Mammary epithelial cell (primary cell): ENCODE measurements at regions of chr1 and their contacts with region 1.

Region 1: DNA sequence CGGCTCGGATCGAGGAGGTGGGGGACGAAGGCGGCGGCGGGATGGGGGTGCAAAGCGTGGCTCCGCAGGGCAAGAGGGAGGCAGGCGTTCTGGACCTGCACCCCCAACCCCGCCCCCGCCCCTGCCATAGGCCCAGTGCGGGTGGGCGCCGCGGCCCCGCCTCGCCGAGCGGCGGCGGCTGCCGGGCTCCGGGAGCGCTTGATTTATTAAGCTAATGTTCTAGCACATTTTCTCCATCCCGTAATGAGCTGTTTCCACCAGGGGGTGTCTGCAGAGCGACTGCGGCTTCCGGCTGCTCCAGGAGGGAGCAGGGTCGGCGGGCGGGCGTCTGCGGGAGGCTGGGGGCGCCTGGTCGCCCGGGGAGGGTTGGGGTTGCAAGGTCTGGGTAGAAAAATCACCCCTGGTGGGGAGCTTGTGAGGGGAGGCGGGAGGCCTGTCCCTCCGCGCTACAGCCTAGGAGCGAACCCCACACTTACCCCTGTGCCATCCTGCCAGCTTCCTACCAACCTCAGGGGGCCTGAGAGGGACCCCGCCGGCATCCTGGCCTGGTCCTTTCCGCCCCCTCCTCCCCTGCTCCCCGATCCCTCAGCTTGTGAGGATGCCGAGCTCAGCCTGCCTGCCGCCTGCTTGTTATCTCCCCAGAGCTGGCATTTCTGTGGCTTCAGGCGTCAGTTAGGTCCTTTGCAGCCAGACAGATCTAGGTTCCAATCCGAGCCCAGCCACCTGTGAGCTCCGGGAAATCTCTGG is 48.5 kb upstream of the ACOT11 start:
- DNase-seq: peak; percentile 12
- H3K4me3 ChIP-seq: peak overlapping the region; percentile 29 to 45 (median 44)
- H3K27ac ChIP-seq: no peak overlapping the region
- H3K4me1 ChIP-seq: peaks cover 20% of the 10 kb centered on the region
- H3K27me3 ChIP-seq: no peaks in the 10 kb centered on the region
- CTCF ChIP-seq: peak in 1 of 2 donors; percentile 59

Region 2: DNA sequence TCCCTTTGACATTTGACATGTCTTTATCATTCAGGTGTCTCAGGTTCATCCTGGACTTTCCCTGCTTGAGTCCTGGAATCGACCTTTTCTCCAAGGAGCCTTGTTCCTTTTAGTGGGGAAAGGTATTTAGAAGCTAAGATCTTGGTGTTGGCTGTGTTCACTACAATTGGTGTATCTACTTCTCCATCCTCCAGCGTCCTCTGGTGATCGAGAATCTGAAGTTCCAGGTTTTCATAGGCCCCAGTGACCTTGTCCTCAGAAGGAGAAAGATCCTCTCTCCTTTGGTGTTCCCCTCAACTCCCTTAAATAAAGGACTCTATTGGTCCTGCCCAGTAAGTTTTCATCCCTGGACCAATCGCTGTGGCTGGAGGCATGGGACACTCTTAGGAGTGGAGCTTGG is 164.2 kb after region 1 on chr1:
- CTCF ChIA-PET with region 1: no interaction called
- dilution Hi-C with region 1: no loop called
- in situ Hi-C with region 1: no loop called
- intact Hi-C with region 1: loop called (anchors 2 kb)
- DNase-seq: no peak
- H3K4me3 ChIP-seq: no peak overlapping the region
- H3K27ac ChIP-seq: no peak overlapping the region
- H3K4me1 ChIP-seq: no peaks in the 10 kb centered on the region
- H3K27me3 ChIP-seq: no peaks in the 10 kb centered on the region
- CTCF ChIP-seq: no peak